Thyroid gland (tissue), 4 donors: ENCODE measurements at regions of chr7 and their contacts with region 1.

Region 1: GRCh38 chr7:123154231-123154860 is 45.4 kb downstream of the SLC13A1 start:
- DNase-seq: peak; percentile 72 to 76
- H3K4me3 ChIP-seq: no peak overlapping the region
- H3K27ac ChIP-seq: no peak overlapping the region
- H3K4me1 ChIP-seq: no peaks in the 10 kb centered on the region
- H3K27me3 ChIP-seq: no peaks in the 10 kb centered on the region
- CTCF ChIP-seq: peak; percentile 48 to 79 (median 69)
- POLR2A ChIP-seq: no peak

Region 2: GRCh38 chr7:122803323-122803722 is 351.0 kb before region 1 on chr7:
- intact Hi-C with region 1: loop called (anchors 10 kb)
- DNase-seq: peak in 1 of 2 donors; percentile 28
- H3K4me3 ChIP-seq: no peak overlapping the region
- H3K27ac ChIP-seq: peak overlapping the region in 1 of 3 donors; percentile 11
- H3K4me1 ChIP-seq: peaks cover 0 to 2% of the 10 kb centered on the region in 2 donors
- H3K27me3 ChIP-seq: no peaks in the 10 kb centered on the region
- CTCF ChIP-seq: peak in 4 of 6 experiments; percentile 23 to 70 (median 58)
- POLR2A ChIP-seq: no peak

Region 3: GRCh38 chr7:122951006-122951405 is 203.3 kb before region 1 on chr7:
- intact Hi-C with region 1: no loop called
- DNase-seq: no peak
- H3K4me3 ChIP-seq: no peak overlapping the region
- H3K27ac ChIP-seq: no peak overlapping the region
- H3K4me1 ChIP-seq: no peaks in the 10 kb centered on the region
- H3K27me3 ChIP-seq: no peaks in the 10 kb centered on the region
- CTCF ChIP-seq: no peak
- POLR2A ChIP-seq: no peak

Region 4: GRCh38 chr7:123260428-123260960 is 106.1 kb after region 1 on chr7:
- intact Hi-C with region 1: no loop called
- DNase-seq: peak; percentile 5 to 38
- H3K4me3 ChIP-seq: no peak overlapping the region
- H3K27ac ChIP-seq: peak overlapping the region in 1 of 3 donors; percentile 40
- H3K4me1 ChIP-seq: peaks cover 0 to 2% of the 10 kb centered on the region in 2 donors
- H3K27me3 ChIP-seq: no peaks in the 10 kb centered on the region
- CTCF ChIP-seq: no peak
- POLR2A ChIP-seq: no peak

Region 5: GRCh38 chr7:123292227-123292626 is 137.9 kb after region 1 on chr7:
- intact Hi-C with region 1: no loop called
- DNase-seq: no peak
- H3K4me3 ChIP-seq: no peak overlapping the region
- H3K27ac ChIP-seq: no peak overlapping the region
- H3K4me1 ChIP-seq: no peaks in the 10 kb centered on the region
- H3K27me3 ChIP-seq: no peaks in the 10 kb centered on the region
- CTCF ChIP-seq: no peak
- POLR2A ChIP-seq: no peak